ENCODE measurements at regions of chr17 and their contacts with region 1.

Region 1: GRCh38 chr17:42997984-42998938 is at the start of gene RPL27:
- DNase-seq: peak; percentile 100
- H3K4me3 ChIP-seq: peak within 1 kb of the TSS; percentile 91
- H3K27me3 ChIP-seq: no peaks in the 10 kb centered on the region
- CTCF ChIP-seq: peak; percentile 81
- polyA plus RNA-seq, gene RPL27: 3,309 and 5,343 TPM in 2 replicates

Region 2: GRCh38 chr17:42850954-42851353 is 147.3 kb before region 1 on chr17 and contains the start of gene AOC3:
- CTCF ChIA-PET with region 1: no interaction called
- POLR2A ChIA-PET with region 1: interaction called, 14 read pairs
- DNase-seq: no peak
- H3K4me3 ChIP-seq: no peak within 1 kb of the TSS
- H3K27me3 ChIP-seq: no peaks in the 10 kb centered on the region; the same call in 1 of the 2 replicates
- CTCF ChIP-seq: no peak
- polyA plus RNA-seq, gene AOC3: 0.10 and 0.22 TPM in 2 replicates

Region 3: DNA sequence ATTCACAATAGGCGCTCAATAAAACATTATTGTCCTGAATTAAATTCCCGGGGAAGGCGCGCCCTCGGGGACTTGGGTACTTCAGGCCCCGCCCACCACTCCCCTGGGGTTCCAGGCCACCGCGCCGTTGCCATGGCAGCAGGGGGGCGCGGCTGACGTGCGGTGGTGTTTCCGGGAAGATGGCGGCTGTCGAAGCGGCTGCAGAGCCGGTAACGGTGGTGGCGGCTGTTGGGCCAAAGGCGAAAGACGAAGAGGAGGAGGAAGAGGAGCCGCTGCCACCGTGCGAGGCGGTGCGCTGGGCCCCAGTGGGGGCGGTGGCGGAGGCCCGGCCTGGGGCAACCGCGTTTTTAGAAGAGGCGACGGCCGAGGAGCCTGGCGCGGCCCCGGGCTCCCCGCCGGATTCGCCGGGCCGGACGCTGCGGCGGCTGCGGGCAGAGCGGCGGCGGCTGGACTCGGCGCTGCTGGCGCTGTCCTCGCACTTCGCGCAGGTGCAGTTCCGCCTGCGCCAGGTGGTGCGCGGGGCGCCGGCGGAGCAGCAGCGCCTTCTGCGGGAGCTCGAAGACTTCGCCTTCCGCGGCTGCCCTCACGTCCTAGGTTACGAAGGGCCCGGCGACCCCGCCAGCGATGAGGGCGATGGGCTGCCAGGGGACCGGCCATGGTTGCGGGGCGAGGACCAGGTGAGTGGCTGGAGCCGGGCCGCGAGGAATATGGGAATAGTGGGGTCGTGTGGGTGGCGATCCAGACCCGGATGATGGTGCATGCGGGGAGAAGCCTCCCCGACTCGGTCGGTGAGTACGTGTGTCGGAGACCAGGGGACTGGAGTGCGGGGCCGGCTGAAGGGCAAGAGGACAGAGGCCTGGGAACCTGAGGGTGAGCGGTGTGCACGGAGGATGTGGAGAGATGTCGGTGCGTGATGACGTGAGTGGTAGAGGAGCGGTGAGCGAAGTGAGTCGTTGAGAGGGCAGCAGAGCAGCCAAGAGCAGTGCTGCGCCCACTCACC is 17.6 kb before region 1 on chr17 and contains the start of gene RUNDC1:
- CTCF ChIA-PET with region 1: interaction called, 13 read pairs
- POLR2A ChIA-PET with region 1: interaction called, 3 read pairs
- DNase-seq: peak; percentile 27
- H3K4me3 ChIP-seq: peak within 1 kb of the TSS; percentile 99
- H3K27me3 ChIP-seq: no peaks in the 10 kb centered on the region
- CTCF ChIP-seq: peak; percentile 6; the same call in 1 of the 2 replicates
- polyA plus RNA-seq, gene RUNDC1: 9.8 and 12.9 TPM in 2 replicates

Measured in BJ (cell line).